ENCODE measurements at regions of chr3 and their contacts with region 1.

Region 1: GRCh38 chr3:55485211-55485791 is 1.8 kb downstream of the WNT5A start:
- DNase-seq: peak; percentile 68 to 77
- ATAC-seq: peak; percentile 62 to 87 (median 82)
- H3K4me3 ChIP-seq: peak overlapping the region; percentile 33 to 72 (median 68)
- H3K27ac ChIP-seq: peak overlapping the region in 9 of 10 donors; percentile 34 to 76 (median 69)
- H3K4me1 ChIP-seq: peaks cover 0 to 49% (median 34%) of the 10 kb centered on the region in 9 donors
- H3K27me3 ChIP-seq: peaks cover 0 to 98% (median 58%) of the 10 kb centered on the region in 7 donors
- CTCF ChIP-seq: peak; percentile 50 to 80 (median 77)

Region 2: DNA sequence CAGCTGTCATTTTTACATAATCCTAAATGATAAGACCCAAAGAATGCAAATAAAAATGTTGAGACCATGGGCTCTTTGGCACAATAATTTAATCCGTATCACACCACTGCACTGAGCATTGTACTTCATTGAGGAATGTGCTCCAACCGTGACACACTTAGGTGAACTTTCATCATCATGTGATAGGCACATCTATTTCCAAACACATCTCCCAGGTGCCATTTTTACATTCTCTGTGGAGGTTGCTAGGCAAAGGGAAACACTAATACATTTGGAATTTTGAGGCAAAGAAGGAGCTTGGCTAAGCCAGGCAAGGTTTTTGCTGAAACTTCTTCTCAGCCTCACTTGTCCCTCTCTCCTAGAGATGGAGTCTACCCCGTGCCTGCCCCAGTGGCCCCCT is 626.1 kb before region 1 on chr3:
- intact Hi-C with region 1: loop called in 1 of 10 experiments (anchors 10 kb)
- DNase-seq: no peak
- ATAC-seq: no peak
- H3K4me3 ChIP-seq: no peak overlapping the region
- H3K27ac ChIP-seq: no peak overlapping the region
- H3K4me1 ChIP-seq: peaks cover 0 to 33% (median 8%) of the 10 kb centered on the region in 9 donors
- H3K27me3 ChIP-seq: no peaks in the 10 kb centered on the region
- CTCF ChIP-seq: no peak

Region 3: DNA sequence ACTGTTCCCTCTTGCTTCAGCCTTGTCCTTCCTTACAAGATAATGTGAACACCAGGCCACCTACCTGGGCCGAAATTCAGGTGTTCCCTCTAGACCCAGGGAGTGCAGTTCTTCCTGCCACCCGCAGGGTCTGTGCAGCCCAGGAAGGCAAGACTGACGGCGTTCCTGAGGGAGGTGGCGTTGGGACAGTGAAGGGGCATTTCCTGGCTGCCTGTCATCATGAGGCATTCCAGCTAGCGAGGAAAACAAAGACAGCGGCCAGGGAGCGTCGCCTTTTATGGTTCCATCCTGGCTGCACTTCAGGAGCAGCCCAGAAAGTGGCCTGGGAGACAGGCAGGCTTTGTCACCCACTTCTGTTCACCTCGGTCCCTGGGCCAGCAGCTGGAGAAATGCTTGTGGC is 86.6 kb after region 1 on chr3:
- intact Hi-C with region 1: loop called in 1 of 10 experiments (anchors 5 kb)
- DNase-seq: peak; percentile 68 to 72
- ATAC-seq: peak; percentile 90 to 99 (median 97)
- H3K4me3 ChIP-seq: no peak overlapping the region
- H3K27ac ChIP-seq: peak overlapping the region in 2 of 10 donors; percentile 9 to 49
- H3K4me1 ChIP-seq: peaks cover 0 to 13% (median 0%) of the 10 kb centered on the region in 9 donors
- H3K27me3 ChIP-seq: peaks cover 0 to 7% (median 0%) of the 10 kb centered on the region in 7 donors
- CTCF ChIP-seq: peak; percentile 26 to 57 (median 48)

Region 4: DNA sequence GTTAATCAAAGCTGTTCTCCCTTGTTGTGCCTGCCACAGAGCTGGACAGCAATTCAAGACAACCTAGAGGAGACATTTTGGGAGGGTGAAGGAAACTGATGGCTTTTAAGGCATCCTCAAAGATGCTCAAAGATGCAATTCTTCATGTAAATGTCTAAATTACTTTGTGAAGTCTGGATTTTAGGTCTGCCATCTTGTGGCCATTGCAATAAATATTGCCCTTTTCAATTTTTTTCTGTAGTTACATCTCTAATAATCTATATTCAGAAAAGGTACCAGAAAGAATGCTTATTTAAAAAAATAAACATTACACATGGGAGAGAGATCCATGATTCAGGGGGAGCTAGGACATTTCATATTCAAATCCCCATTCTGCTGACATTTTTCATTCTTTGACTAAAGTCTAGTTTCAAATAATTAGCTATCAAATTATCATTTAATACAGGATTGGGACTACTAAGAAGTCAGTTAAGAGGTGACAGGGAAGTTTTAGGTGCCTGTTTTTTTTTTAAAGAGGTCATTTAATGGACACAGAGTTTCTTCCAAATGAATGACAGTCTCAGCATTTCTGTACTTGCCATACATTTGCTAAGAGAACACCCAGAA is 261.6 kb after region 1 on chr3:
- intact Hi-C with region 1: loop called in 3 of 10 experiments (anchors 5 kb)
- DNase-seq: no peak
- ATAC-seq: no peak
- H3K4me3 ChIP-seq: no peak overlapping the region
- H3K27ac ChIP-seq: no peak overlapping the region
- H3K4me1 ChIP-seq: no peaks in the 10 kb centered on the region
- H3K27me3 ChIP-seq: no peaks in the 10 kb centered on the region
- CTCF ChIP-seq: peak in 6 of 9 donors; percentile 33 to 53 (median 46)

Region 5: GRCh38 chr3:56197259-56197965 is 712.1 kb after region 1 on chr3:
- intact Hi-C with region 1: no loop called
- DNase-seq: no peak
- ATAC-seq: peak in 4 of 8 donors; percentile 38 to 68 (median 51)
- H3K4me3 ChIP-seq: no peak overlapping the region
- H3K27ac ChIP-seq: peak overlapping the region in 1 of 10 donors; percentile 10
- H3K4me1 ChIP-seq: peaks cover 0 to 4% (median 0%) of the 10 kb centered on the region in 9 donors
- H3K27me3 ChIP-seq: no peaks in the 10 kb centered on the region
- CTCF ChIP-seq: no peak

Region 6: GRCh38 chr3:56251343-56251945 is 766.1 kb after region 1 on chr3:
- intact Hi-C with region 1: loop called in 6 of 10 experiments (anchors 5 kb)
- DNase-seq: peak in 1 of 2 donors; percentile 32
- ATAC-seq: peak in 1 of 8 donors; percentile 39
- H3K4me3 ChIP-seq: no peak overlapping the region
- H3K27ac ChIP-seq: no peak overlapping the region
- H3K4me1 ChIP-seq: no peaks in the 10 kb centered on the region
- H3K27me3 ChIP-seq: peaks cover 0 to 4% (median 0%) of the 10 kb centered on the region in 7 donors
- CTCF ChIP-seq: peak; percentile 55 to 82 (median 77)